T-cell (primary cell): ENCODE measurements at regions of chr12 and their contacts with region 1.

Region 1: GRCh38 chr12:53274445-53274844 is 6.3 kb downstream of the ESPL1 start:
- DNase-seq: no peak
- ATAC-seq: no peak
- H3K4me3 ChIP-seq: no peak overlapping the region
- H3K4me3 Mint-ChIP-seq: no peak overlapping the region
- H3K27ac ChIP-seq: no peak overlapping the region
- H3K27ac Mint-ChIP-seq: no peak overlapping the region
- H3K4me1 ChIP-seq: no peaks in the 10 kb centered on the region
- H3K4me1 Mint-ChIP-seq: no peaks in the 10 kb centered on the region
- H3K27me3 ChIP-seq: no peaks in the 10 kb centered on the region
- H3K27me3 Mint-ChIP-seq: peaks cover 0 to 3% of the 10 kb centered on the region in 2 donors

Region 2: GRCh38 chr12:53232646-53233461 is 41.6 kb before region 1 on chr12:
- CTCF ChIA-PET with region 1: no interaction called
- POLR2A ChIA-PET with region 1: interaction called in 1 of 2 experiments, 10 read pairs
- DNase-seq: peak in 23 of 35 experiments; percentile 24 to 58 (median 39)
- ATAC-seq: peak; percentile 29 to 53 (median 36)
- H3K4me3 ChIP-seq: peak overlapping the region; percentile 50 to 53
- H3K4me3 Mint-ChIP-seq: peak overlapping the region; percentile 84 to 93 (median 86)
- H3K27ac ChIP-seq: peak overlapping the region; percentile 94
- H3K27ac Mint-ChIP-seq: peak overlapping the region; percentile 93 to 94
- H3K4me1 ChIP-seq: peaks cover 24 to 83% of the 10 kb centered on the region in 2 experiments
- H3K4me1 Mint-ChIP-seq: peaks cover 57 to 81% (median 80%) of the 10 kb centered on the region in 3 donors
- H3K27me3 ChIP-seq: no peaks in the 10 kb centered on the region
- H3K27me3 Mint-ChIP-seq: no peaks in the 10 kb centered on the region

Region 3: GRCh38 chr12:53259891-53260290 is 14.6 kb before region 1 on chr12:
- CTCF ChIA-PET with region 1: interaction called, 3 to 4 read pairs
- POLR2A ChIA-PET with region 1: interaction called in 1 of 2 experiments, 11 read pairs
- DNase-seq: no peak
- ATAC-seq: no peak
- H3K4me3 ChIP-seq: no peak overlapping the region
- H3K4me3 Mint-ChIP-seq: no peak overlapping the region
- H3K27ac ChIP-seq: no peak overlapping the region
- H3K27ac Mint-ChIP-seq: peak overlapping the region in 1 of 2 donors; percentile 28
- H3K4me1 ChIP-seq: peaks cover 14 to 16% of the 10 kb centered on the region in 2 experiments
- H3K4me1 Mint-ChIP-seq: peaks cover 16 to 30% (median 18%) of the 10 kb centered on the region in 3 donors
- H3K27me3 ChIP-seq: no peaks in the 10 kb centered on the region
- H3K27me3 Mint-ChIP-seq: no peaks in the 10 kb centered on the region

Region 4: DNA sequence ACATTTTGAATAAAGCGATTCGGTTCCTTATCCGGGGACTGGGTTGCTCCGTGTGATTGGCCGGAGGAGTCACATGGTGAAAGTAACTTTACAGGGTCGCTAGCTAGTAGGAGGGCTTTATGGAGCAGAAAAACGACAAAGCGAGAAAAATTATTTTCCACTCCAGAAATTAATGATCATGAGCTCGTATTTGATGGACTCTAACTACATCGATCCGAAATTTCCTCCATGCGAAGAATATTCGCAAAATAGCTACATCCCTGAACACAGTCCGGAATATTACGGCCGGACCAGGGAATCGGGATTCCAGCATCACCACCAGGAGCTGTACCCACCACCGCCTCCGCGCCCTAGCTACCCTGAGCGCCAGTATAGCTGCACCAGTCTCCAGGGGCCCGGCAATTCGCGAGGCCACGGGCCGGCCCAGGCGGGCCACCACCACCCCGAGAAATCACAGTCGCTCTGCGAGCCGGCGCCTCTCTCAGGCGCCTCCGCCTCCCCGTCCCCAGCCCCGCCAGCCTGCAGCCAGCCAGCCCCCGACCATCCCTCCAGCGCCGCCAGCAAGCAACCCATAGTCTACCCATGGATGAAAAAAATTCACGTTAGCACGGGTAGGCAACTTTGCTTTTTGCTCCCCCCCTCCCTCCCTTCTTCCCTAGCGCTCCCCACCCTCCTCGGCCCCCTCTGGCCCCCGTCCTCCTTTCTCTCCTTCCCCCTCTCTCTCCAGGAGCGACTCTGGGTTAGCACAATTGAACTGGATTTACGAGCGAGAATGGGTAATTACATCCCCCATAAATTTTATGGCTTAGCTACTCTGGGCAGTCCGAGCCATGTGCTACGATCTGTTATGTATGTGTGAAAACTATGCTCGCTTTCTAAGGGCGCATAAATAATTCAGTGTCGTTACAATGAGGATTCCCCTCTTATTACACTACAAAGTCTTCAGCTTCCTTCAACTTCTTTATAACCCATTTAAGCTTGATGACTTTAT is 779.6 kb after region 1 on chr12 and contains the start of gene HOXC4:
- CTCF ChIA-PET with region 1: no interaction called
- POLR2A ChIA-PET with region 1: no interaction called
- DNase-seq: peak in 10 of 35 experiments; percentile 10 to 55 (median 28)
- ATAC-seq: peak; percentile 58 to 67 (median 60)
- H3K4me3 ChIP-seq: peak within 1 kb of the TSS; percentile 46 to 59
- H3K4me3 Mint-ChIP-seq: peak within 1 kb of the TSS; percentile 59 to 76 (median 65)
- H3K27ac ChIP-seq: peak within 1 kb of the TSS; percentile 74
- H3K27ac Mint-ChIP-seq: peak within 1 kb of the TSS in 1 of 2 donors; percentile 39
- H3K4me1 ChIP-seq: peaks cover 4 to 41% of the 10 kb centered on the region in 2 experiments
- H3K4me1 Mint-ChIP-seq: peaks cover 34 to 44% (median 41%) of the 10 kb centered on the region in 3 donors
- H3K27me3 ChIP-seq: peaks cover 28 to 60% of the 10 kb centered on the region in 2 experiments
- H3K27me3 Mint-ChIP-seq: peaks cover 70 to 90% of the 10 kb centered on the region in 2 donors
- total RNA-seq, gene HOXC4: 0.36 to 1.4 (median 0.61) TPM